ENCODE measurements at regions of chr17 and their contacts with region 1.

Region 1: DNA sequence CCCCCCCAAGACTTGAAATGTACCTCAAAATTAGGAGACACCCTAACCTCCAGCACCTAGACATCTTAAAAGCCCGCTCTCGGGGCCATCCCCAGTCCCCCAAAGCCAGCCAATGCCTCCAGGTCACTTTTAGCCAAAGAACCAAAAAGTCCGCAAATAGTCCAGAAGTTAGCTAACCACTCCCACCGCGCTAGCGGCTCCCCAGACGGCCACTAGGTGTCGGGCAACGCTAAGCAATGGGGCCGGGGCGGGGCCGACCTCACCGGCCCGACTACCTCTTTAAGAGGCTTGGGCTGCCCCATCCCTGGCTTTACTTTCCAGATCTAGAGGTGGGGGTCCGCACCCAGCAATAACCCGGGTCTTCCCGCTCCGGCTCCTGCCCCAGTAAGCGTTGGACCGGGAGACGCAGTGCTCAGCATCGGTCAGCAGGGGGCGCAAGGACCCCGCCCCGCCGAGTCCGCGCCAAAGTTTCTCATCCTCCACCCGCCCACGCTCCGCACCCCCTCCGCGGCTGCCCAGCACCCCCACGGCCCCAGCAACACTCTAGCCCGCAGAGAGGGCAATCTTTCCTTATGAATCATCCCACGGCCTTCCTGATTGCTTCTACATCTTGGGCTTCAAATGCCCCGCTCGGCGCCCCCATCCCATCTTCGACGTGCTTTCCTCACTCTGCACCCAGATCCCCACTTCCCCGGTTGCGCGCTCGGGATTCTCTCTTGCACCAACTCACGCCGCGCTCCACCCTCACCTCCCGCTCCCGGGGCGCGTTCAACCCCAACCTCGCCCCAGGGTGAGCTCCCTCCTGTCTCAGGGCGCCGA is 765 bp downstream of the COL1A1 start:
- DNase-seq: peak; percentile 89
- CTCF ChIP-seq: peak; percentile 89

Region 2: DNA sequence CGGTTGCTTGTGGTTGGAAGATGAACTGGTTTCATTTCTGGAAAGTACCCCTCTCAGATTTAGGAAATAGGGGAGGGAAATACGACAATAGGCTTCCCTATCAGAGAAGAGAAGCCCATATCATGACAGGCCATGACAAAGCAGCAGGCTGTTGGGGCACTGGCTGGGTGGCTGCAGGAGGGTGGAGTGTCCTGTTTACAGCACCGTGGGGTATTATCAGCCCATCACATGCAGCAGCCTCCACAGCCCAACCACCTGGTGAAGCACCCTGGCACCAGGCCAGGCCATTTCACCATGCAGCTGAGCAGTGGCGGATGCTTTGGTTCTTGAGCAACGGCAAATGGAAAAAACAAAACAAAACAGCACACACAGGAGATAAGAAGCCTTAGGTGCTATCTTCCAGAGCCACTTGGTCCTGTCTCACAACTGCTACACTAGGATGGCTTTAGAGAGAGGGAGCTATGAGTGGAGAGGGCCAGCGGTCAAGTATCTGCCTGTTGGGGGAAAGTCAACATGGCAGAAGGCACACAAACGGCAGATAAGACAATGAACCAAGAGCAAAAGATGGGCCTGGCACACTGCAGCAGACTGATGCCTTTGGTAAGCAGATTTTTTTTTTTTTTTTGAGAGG is 460.9 kb before region 1 on chr17:
- CTCF ChIA-PET with region 1: no interaction called
- POLR2A ChIA-PET with region 1: no interaction called
- DNase-seq: peak; percentile 63
- CTCF ChIP-seq: no peak

Region 3: DNA sequence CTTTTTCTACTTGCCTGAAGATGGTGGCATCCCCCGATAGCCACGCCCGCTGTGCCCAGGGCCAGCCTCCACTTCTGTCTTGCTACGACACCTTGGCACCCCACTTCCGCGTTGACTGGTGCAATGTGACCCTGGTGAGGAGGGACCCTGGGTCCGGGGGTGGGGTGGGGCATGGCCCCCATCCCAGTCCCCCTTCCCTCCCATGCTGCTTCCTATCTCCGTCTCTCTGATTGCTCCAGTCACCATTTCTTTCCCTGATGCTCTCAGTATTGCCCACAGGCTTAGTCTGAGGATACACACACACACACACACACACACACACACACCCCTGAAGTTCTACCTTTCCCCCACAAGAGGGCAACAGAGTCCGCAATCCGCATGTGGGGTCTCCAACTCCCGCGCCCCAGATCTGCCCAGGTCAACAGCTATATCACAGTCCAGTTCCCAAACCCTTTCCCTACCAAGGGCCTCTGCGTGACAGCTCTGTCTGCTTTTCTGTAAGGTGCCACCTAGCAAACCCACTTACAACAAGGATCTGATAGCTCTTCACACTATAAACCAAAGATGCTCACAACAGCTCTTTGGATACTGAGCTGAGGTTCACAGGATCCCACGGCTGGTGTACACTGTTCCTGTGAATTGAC is 31.4 kb before region 1 on chr17:
- CTCF ChIA-PET with region 1: interaction called, 107 read pairs
- POLR2A ChIA-PET with region 1: no interaction called
- DNase-seq: peak; percentile 75
- CTCF ChIP-seq: peak; percentile 84

Region 4: GRCh38 chr17:50213026-50214022 is 12.7 kb after region 1 on chr17:
- CTCF ChIA-PET with region 1: interaction called, 196 read pairs
- POLR2A ChIA-PET with region 1: interaction called, 10 read pairs
- DNase-seq: peak; percentile 76
- CTCF ChIP-seq: no peak

Region 5: GRCh38 chr17:50279181-50279526 is 78.5 kb after region 1 on chr17:
- CTCF ChIA-PET with region 1: interaction called, 128 read pairs
- POLR2A ChIA-PET with region 1: no interaction called
- DNase-seq: no peak
- CTCF ChIP-seq: no peak

Region 6: GRCh38 chr17:50318501-50319285 is 118.0 kb after region 1 on chr17:
- CTCF ChIA-PET with region 1: interaction called, 324 read pairs
- POLR2A ChIA-PET with region 1: no interaction called
- DNase-seq: no peak
- CTCF ChIP-seq: no peak

Measured in GM10248 (cell line).